GM10248 (cell line): ENCODE measurements at regions of chr19 and their contacts with region 1.

Region 1: GRCh38 chr19:38374429-38375176 is at the start of gene PSMD8:
- DNase-seq: peak; percentile 99
- CTCF ChIP-seq: peak; percentile 34

Region 2: GRCh38 chr19:38229585-38230073 is 145.0 kb before region 1 on chr19:
- CTCF ChIA-PET with region 1: interaction called, 12 read pairs
- POLR2A ChIA-PET with region 1: no interaction called
- DNase-seq: peak; percentile 89
- CTCF ChIP-seq: no peak

Region 3: DNA sequence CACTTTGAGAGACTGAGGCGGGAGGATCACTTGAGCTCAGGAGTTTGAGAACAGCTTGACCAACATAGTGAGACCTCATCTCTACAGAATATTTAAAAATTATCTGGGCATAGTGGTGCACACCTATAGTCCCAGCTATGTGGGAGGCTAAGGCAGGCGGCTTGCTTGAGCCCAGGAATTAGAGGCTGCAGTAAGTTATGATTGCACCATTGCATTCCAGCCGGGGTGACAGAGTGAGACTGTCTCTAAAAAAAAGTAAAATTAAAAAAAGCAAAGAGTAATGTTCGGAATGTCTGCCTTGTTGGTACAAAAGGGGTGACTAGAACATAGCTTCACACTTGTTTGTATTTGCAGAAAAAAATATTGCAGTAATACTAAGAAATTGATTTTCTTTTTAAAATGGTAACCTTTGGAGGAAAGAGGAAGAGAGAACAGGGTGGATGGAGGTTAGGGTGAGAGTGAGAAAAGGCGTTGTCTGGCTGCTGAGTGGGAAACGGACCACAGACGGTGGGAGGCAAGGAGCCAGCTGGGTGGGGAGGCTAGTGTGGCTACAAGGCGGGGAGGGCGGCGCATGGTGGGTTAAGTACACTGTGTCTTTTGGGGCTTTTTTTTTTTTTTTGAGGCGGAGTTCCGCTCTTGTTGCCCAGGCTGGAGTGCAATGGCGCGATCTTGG is 128.6 kb before region 1 on chr19:
- CTCF ChIA-PET with region 1: interaction called, 11 read pairs
- POLR2A ChIA-PET with region 1: no interaction called
- DNase-seq: no peak
- CTCF ChIP-seq: no peak

Region 4: DNA sequence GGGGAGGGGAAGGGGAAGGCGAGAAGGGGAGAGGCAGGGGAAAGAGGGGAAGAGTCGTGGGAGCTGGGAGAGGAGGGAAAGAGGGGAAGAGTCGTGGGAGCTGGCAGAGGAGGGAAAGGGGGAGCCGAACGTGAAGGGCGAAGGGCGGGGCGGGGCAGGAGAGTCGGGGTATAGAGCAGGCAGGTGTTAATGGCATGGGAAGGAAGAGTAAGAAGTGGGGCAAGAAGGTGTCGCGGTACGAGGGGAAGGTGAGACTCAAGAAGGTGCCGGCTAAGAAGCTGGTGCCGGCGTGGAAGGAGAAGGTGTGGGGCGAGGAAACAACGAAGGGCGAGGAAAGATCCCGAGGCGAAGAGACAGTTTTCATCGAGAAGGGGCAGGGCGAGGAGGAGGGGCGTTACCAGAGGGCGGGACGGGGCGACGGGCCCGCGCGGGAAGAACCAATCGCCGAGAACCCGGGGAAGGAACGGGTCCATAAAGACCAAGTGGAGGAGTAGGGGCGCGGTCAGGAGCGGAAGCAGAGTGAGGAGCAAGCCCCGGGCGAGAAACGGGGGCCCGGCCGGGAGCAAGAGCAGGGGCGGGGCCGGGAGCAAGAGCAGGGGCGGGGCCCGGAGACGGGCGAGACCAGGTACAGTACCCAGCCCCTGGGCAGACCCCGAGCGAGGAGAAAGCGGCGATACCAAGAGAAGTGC is 38.5 kb before region 1 on chr19:
- CTCF ChIA-PET with region 1: interaction called, 26 read pairs
- POLR2A ChIA-PET with region 1: interaction called, 7 read pairs
- DNase-seq: peak; percentile 94
- CTCF ChIP-seq: no peak

Region 5: GRCh38 chr19:38387550-38388348 is 13.1 kb after region 1 on chr19 and contains the start of gene GGN:
- CTCF ChIA-PET with region 1: interaction called, 8 read pairs
- POLR2A ChIA-PET with region 1: interaction called, 40 read pairs
- DNase-seq: peak; percentile 87
- CTCF ChIP-seq: no peak

Region 6: GRCh38 chr19:38425810-38426466 is 51.3 kb after region 1 on chr19 and contains the start of gene RASGRP4:
- CTCF ChIA-PET with region 1: no interaction called
- POLR2A ChIA-PET with region 1: no interaction called
- DNase-seq: peak; percentile 53
- CTCF ChIP-seq: no peak